Calu3 (cell line): ENCODE measurements at regions of chr10 and their contacts with region 1.

Region 1: GRCh38 chr10:114631666-114632417 is 26.2 kb downstream of the ABLIM1 start:
- DNase-seq: peak; percentile 39
- H3K4me3 Mint-ChIP-seq: peak overlapping the region; percentile 87
- H3K27ac Mint-ChIP-seq: peak overlapping the region; percentile 81
- H3K4me1 Mint-ChIP-seq: peaks cover 61% of the 10 kb centered on the region
- H3K27me3 Mint-ChIP-seq: no peaks in the 10 kb centered on the region
- CTCF ChIP-seq: no peak

Region 2: GRCh38 chr10:114561008-114561532 is 70.8 kb before region 1 on chr10:
- CTCF ChIA-PET with region 1: no interaction called
- intact Hi-C with region 1: loop called (anchors 5 kb)
- DNase-seq: no peak
- H3K4me3 Mint-ChIP-seq: no peak overlapping the region
- H3K27ac Mint-ChIP-seq: no peak overlapping the region
- H3K4me1 Mint-ChIP-seq: peaks cover 18% of the 10 kb centered on the region
- H3K27me3 Mint-ChIP-seq: no peaks in the 10 kb centered on the region
- CTCF ChIP-seq: no peak

Region 3: GRCh38 chr10:114577133-114577532 is 54.7 kb before region 1 on chr10:
- CTCF ChIA-PET with region 1: no interaction called
- intact Hi-C with region 1: no loop called
- DNase-seq: no peak
- H3K4me3 Mint-ChIP-seq: no peak overlapping the region
- H3K27ac Mint-ChIP-seq: no peak overlapping the region
- H3K4me1 Mint-ChIP-seq: no peaks in the 10 kb centered on the region
- H3K27me3 Mint-ChIP-seq: no peaks in the 10 kb centered on the region
- CTCF ChIP-seq: no peak

Region 4: DNA sequence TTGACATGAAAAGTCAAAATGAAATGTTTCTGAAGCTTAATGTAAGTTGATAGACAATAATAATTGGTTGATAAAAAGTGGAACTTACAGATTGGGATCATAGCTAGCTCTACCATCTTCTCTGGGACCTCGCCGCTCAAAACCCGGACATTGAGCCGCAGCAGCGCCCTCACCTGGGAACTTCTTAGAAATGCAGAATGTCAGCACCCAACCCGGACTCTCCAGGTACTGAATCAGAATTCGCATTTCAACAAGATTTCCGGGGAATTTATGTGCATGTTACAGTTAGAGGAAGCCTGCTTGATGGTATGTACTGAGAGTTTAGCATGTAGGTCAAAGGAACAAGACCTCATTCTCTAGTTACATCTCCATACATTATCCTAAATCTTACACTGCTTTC is 62.9 kb after region 1 on chr10:
- CTCF ChIA-PET with region 1: interaction called, 3 read pairs
- intact Hi-C with region 1: loop called (anchors 2 kb)
- DNase-seq: peak; percentile 58
- H3K4me3 Mint-ChIP-seq: no peak overlapping the region
- H3K27ac Mint-ChIP-seq: no peak overlapping the region
- H3K4me1 Mint-ChIP-seq: peaks cover 27% of the 10 kb centered on the region
- H3K27me3 Mint-ChIP-seq: no peaks in the 10 kb centered on the region
- CTCF ChIP-seq: peak; percentile 39

Region 5: GRCh38 chr10:114881417-114881816 is 249.6 kb after region 1 on chr10:
- CTCF ChIA-PET with region 1: no interaction called
- intact Hi-C with region 1: no loop called
- DNase-seq: no peak
- H3K4me3 Mint-ChIP-seq: no peak overlapping the region
- H3K27ac Mint-ChIP-seq: peak overlapping the region; percentile 62
- H3K4me1 Mint-ChIP-seq: peaks cover 27% of the 10 kb centered on the region
- H3K27me3 Mint-ChIP-seq: no peaks in the 10 kb centered on the region
- CTCF ChIP-seq: no peak

Region 6: DNA sequence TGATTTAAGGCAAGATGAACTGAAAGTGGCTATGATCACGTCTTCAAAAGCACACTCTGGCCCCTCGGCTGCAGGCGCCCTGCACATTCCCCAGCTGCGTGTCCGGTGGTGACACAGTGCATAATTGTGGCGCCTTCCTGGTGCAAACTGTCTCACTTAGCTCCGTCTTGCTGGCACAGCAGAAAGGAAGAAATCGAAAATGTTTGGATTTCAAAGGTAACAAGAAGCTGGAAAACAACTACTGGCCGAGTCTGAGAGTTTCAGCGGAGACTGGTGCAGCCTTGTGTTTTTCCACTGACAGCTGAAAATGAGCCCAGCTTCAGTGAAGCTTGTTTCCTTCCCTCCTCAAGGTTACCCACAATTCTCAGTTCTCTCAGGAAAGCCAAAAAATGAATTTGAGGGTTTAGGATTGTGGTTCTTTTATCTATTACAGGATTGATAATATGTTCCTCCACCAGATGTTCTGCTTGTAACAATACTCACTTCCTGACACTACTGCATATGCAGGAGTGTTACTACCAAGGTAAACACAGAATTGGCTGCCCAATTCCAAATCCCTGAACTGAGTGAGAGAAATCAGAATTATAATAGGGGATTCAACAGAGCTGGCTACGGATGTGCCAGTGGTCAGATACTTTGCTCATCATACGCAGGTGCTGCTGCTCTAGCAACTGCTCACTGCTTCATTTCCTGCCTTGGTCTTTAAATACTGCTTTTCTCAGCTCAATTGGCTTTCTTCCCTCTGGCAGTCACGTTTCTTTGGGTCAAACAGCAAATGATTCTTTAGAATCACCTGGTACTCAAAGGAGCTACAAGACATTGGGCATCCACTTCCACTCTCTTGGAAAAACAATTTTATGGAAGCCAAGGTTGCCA is 369.9 kb after region 1 on chr10:
- CTCF ChIA-PET with region 1: no interaction called
- intact Hi-C with region 1: no loop called
- DNase-seq: no peak
- H3K4me3 Mint-ChIP-seq: no peak overlapping the region
- H3K27ac Mint-ChIP-seq: no peak overlapping the region
- H3K4me1 Mint-ChIP-seq: no peaks in the 10 kb centered on the region
- H3K27me3 Mint-ChIP-seq: peaks cover 8% of the 10 kb centered on the region
- CTCF ChIP-seq: no peak